ENCODE measurements at regions of chr11 and their contacts with region 1.

Region 1: DNA sequence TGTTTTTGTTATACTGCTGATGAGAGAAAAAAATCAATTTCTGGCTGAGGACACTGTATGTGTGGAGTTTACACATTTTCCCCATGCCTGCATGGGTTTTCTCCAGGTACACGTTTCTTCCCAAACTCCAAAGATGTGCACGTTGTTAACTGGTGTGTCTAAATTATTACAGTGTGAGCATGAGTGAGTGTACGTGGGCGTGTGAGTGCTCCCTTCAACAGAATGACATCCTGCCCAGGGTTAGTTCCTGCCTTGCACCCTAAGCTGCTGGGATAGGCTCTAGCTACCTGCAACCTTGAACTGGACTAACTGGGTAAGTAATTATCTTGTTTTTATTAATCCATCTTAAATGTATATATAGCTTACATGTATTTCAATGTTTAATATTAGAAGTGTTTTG is 5.5 kb downstream of the NPAT start:
- DNase-seq: no peak
- ATAC-seq: peak; percentile 30
- H3K4me3 ChIP-seq: 0 out of 2 replicates have a peak overlapping the region, but pooled peaks have one; percentile 9
- H3K27ac ChIP-seq: no peak overlapping the region
- H3K4me1 ChIP-seq: peaks cover 11% of the 10 kb centered on the region
- H3K27me3 ChIP-seq: no peaks in the 10 kb centered on the region
- CTCF ChIP-seq: no peak
- EP300 ChIP-seq: no peak
- POLR2A ChIP-seq: no peak
- RAD21 ChIP-seq: no peak

Region 2: DNA sequence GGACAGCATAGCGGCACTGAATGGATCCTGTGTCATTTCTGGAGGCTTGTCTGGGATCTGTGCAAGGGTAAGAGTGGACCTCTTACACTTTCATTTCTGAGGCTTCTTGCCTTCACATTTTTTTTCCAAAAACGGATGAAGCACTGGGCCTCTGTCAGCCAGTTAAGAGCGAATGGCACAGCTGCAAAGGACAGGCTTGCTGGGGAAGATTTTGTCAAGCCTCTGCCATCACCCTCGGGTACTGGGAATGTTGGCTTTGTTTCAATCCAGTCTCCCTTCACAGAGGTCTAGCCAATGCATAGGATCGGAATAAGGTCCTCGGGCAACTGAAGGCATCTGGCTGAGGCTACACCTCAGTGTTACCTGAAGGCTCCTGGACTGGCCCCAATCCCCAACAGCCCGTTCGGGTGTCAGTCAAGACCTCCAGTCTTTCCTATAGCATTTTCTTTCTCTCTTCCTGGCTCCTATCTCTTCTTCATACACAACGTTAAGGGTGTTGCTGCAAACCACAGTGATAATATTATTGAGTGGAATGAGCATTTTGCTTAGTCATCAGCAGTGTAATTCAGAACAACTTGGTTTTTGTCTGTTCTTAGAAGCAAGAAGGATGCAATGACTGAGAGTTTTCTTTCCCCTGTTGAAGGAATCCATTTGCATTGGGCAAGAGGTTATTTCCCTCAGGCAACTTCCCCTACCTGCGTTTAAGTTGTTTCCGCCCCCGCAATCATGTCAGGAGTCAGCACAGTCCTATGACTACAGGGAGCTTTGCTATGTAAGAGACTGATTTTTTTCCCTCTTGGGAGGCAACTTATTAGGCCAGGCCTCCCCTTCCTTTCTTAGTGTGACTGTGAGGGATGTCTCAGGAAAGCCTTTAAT is 17.3 kb before region 1 on chr11:
- CTCF ChIA-PET with region 1: interaction called, 6 read pairs
- POLR2A ChIA-PET with region 1: interaction called, 5 read pairs
- RAD21 ChIA-PET with region 1: interaction called, 7 read pairs
- SMC1A ChIA-PET with region 1: interaction called, 21 read pairs
- in situ Hi-C with region 1: no loop called
- intact Hi-C with region 1: no loop called
- DNase-seq: peak; percentile 68
- ATAC-seq: peak; percentile 86
- H3K4me3 ChIP-seq: no peak overlapping the region
- H3K27ac ChIP-seq: peak overlapping the region; percentile 28
- H3K4me1 ChIP-seq: peaks cover 35% of the 10 kb centered on the region
- H3K27me3 ChIP-seq: no peaks in the 10 kb centered on the region
- CTCF ChIP-seq: no peak
- EP300 ChIP-seq: no peak
- POLR2A ChIP-seq: no peak
- RAD21 ChIP-seq: no peak

Measured in GM12878 (cell line).